ENCODE measurements at regions of chr4 and their contacts with region 1.

Region 1: GRCh38 chr4:99949034-99949998 is 759 bp downstream of the H2AZ1 start:
- DNase-seq: peak; percentile 96
- H3K4me3 Mint-ChIP-seq: no peak overlapping the region
- H3K27ac Mint-ChIP-seq: no peak overlapping the region
- H3K4me1 Mint-ChIP-seq: peaks cover 31% of the 10 kb centered on the region
- H3K27me3 Mint-ChIP-seq: no peaks in the 10 kb centered on the region

Region 2: DNA sequence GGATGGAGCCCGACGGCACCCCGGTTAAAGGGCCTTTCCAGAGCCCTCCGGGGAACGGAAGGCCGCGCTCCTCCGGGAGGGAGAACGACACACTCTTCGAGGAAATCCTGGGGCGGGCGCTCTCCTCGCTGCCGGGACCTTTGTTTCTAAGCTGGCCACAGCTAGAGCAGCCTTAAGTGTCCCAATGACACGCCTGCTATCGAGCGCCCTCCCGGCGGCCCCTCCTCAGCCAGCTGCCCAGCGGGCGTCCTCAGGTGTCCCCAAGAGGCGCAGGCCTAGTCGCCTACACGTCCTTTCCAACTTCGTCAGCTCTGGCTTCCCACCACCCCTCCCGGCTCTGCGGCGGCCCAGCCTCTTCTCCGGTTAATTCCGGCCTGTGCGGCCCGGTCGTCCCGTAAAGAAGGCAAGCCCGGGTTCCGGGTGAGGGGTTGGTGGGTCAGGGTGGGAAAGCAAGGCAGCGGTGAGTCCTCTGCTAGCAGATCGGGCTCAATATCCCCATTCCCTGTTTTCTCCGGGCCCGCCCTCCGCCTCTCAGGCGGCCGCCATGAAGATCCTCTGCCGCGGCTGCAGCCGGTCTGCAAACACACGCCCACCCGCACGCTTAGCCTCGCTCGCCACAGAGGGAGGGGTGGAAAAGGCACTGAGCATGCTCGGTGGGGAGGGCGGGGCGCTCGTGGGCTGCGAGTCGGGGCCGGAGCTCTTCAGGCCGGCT is 1688.6 kb before region 1 on chr4:
- CTCF ChIA-PET with region 1: no interaction called
- intact Hi-C with region 1: loop called (anchors 5 kb)
- DNase-seq: peak; percentile 95
- H3K4me3 Mint-ChIP-seq: peak overlapping the region; percentile 93
- H3K27ac Mint-ChIP-seq: peak overlapping the region; percentile 94
- H3K4me1 Mint-ChIP-seq: peaks cover 43% of the 10 kb centered on the region
- H3K27me3 Mint-ChIP-seq: no peaks in the 10 kb centered on the region

Region 3: GRCh38 chr4:99504804-99505569 is 444.3 kb before region 1 on chr4:
- CTCF ChIA-PET with region 1: no interaction called
- intact Hi-C with region 1: loop called (anchors 5 kb)
- DNase-seq: no peak
- H3K4me3 Mint-ChIP-seq: no peak overlapping the region
- H3K27ac Mint-ChIP-seq: no peak overlapping the region
- H3K4me1 Mint-ChIP-seq: peaks cover 49% of the 10 kb centered on the region
- H3K27me3 Mint-ChIP-seq: no peaks in the 10 kb centered on the region

Region 4: GRCh38 chr4:99816545-99817308 is 132.6 kb before region 1 on chr4 and contains the start of gene DAPP1:
- CTCF ChIA-PET with region 1: interaction called, 9 read pairs
- intact Hi-C with region 1: loop called (anchors 1 kb)
- DNase-seq: peak; percentile 87
- H3K4me3 Mint-ChIP-seq: peak within 1 kb of the TSS; percentile 76
- H3K27ac Mint-ChIP-seq: peak within 1 kb of the TSS; percentile 94
- H3K4me1 Mint-ChIP-seq: peaks cover 71% of the 10 kb centered on the region
- H3K27me3 Mint-ChIP-seq: no peaks in the 10 kb centered on the region
- total RNA-seq, gene DAPP1: 24.4 to 25.8 TPM

Region 5: GRCh38 chr4:99921174-99921573 is 28.1 kb before region 1 on chr4:
- CTCF ChIA-PET with region 1: interaction called, 3 read pairs
- intact Hi-C with region 1: loop called (anchors 1 kb)
- DNase-seq: peak; percentile 41
- H3K4me3 Mint-ChIP-seq: no peak overlapping the region
- H3K27ac Mint-ChIP-seq: peak overlapping the region; percentile 39
- H3K4me1 Mint-ChIP-seq: peaks cover 19% of the 10 kb centered on the region
- H3K27me3 Mint-ChIP-seq: no peaks in the 10 kb centered on the region

Region 6: DNA sequence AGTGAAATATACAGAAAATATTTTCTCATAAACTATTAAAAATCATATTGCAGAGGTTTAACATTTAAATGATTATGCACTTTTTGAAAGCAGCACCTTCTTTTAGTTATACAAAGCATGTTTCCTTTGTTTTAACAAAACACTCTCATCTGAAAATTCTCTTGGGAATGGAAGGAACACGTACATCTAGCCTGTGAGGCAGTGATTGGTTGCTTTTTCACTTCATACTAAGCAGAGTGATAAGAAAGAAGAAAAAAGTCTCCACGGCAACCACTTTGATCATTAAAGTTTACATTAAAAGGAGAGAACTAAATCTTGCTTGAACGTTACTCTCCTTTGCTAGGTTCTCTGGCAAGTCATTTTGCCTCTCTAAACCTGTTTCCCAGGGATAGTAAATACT is 42.4 kb after region 1 on chr4:
- CTCF ChIA-PET with region 1: no interaction called
- intact Hi-C with region 1: no loop called
- DNase-seq: no peak
- H3K4me3 Mint-ChIP-seq: no peak overlapping the region
- H3K27ac Mint-ChIP-seq: no peak overlapping the region
- H3K4me1 Mint-ChIP-seq: no peaks in the 10 kb centered on the region
- H3K27me3 Mint-ChIP-seq: peaks cover 19% of the 10 kb centered on the region

Region 7: DNA sequence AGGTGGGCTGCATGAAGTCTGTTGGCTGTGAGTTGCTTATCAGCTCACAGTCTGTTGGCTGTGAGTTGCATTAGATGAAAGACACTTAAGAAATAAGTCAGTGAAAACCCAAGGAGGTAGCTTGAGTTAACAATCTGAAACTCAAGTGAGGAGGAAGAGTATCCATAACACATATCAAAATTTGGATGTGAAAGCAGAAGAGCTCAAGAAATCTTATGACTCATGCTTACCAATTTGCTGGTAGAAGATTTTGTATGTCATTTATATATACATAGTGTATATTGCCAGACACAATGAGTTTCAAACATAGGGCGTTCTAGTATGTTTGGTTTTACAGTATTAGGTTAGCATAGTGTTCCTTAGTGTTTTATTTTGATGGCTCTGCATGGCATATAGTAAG is 133.5 kb after region 1 on chr4:
- CTCF ChIA-PET with region 1: interaction called, 5 read pairs
- intact Hi-C with region 1: loop called (anchors 1 kb)
- DNase-seq: peak; percentile 35
- H3K4me3 Mint-ChIP-seq: no peak overlapping the region
- H3K27ac Mint-ChIP-seq: peak overlapping the region; percentile 89
- H3K4me1 Mint-ChIP-seq: peaks cover 72% of the 10 kb centered on the region
- H3K27me3 Mint-ChIP-seq: peaks cover 2% of the 10 kb centered on the region

Measured in activated naive CD4-positive, alpha-beta T cell treated with anti-CD3 and anti-CD28 coated beads for 36 hours (primary cell).